PC-3 (cell line): ENCODE measurements at regions of chr17 and their contacts with region 1.

Region 1: DNA sequence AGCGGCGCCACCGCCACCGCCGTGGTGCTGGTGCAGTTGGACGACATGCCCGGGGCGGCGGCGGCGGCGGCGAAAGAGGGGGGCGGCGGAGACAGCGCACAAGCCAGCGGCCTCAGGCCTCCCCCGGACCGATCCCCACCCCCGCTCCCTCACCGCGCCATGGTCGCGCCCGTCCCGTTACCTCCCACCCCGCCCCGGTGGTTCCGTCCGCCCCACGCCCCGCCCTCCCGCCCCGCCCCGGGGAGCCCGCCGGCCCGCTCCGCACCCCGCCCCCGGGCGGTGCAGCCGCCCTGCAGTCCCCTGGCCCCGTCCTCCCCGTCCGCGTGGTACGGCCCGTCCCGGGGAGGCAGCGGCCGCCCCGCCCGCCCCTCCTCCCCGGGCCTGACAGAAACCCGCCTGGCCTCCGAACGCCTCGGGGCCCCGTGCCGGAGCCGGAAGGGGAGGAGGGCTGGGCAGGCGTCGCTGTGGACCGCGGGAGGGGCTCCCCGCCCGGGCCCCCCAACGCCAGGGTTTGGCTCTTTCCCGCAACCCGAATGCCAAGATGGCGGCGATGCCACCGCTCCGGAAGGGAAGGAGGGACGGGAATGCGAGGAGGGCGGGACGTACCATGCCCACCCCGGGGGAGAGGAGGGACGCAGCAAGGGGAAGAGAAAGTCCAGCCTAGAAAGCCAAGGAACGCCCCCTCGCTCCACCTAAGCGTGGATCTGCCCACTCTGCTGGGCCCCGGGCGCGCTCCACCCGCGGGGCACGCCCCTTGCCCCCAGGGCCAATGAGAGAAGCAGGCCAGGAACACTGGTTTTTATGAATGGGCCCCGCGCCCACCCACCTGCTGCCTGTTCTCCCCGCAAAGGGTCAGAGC is at the start of gene PIP4K2B:
- DNase-seq: peak; percentile 89
- ATAC-seq: peak; percentile 92
- H3K4me3 ChIP-seq: peak within 1 kb of the TSS; percentile 72
- H3K27ac ChIP-seq: peak within 1 kb of the TSS; percentile 92
- H3K4me1 ChIP-seq: peaks cover 16% of the 10 kb centered on the region
- H3K27me3 ChIP-seq: no peaks in the 10 kb centered on the region
- CTCF ChIP-seq: no peak
- total RNA-seq, gene PIP4K2B: 25.5 and 43.7 TPM in 2 replicates

Region 2: DNA sequence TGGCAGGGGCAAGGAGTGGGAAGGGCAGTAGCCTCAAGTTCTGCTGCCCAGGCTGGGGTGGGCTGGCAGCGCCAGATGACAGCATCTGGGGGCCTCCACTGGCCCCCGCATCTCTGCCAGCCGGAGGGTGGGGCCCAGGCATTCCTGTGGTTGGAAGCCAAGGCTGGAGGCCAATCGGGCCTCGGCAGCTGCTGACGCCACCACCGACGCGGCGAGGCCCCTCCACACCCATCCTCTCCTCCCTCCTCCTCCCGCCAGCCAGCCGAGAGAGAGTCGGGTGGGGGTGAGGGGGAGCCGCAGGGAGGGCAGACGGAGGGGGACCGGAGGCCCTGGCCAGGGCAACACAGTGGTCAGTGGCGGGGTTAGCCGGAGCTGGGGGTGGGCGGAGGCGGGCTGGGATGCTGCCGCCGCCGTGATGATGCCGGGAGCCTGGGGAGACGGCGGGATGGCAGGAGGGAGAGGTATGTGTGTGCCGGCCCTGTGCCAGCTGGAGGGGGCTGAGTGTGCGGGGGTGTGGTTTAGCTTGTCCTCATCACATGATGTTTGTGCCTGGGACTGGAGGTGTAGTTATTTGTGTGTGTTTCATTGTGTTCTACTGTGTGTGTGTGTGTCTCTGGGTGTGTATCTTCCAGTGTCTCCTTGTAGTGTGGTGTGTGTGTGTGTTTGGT is 334.8 kb before region 1 on chr17:
- CTCF ChIA-PET with region 1: no interaction called
- POLR2A ChIA-PET with region 1: no interaction called
- intact Hi-C with region 1: no loop called
- DNase-seq: no peak
- ATAC-seq: no peak
- H3K4me3 ChIP-seq: no peak overlapping the region
- H3K27ac ChIP-seq: no peak overlapping the region
- H3K4me1 ChIP-seq: no peaks in the 10 kb centered on the region
- H3K27me3 ChIP-seq: no peaks in the 10 kb centered on the region
- CTCF ChIP-seq: no peak

Region 3: GRCh38 chr17:38752119-38752929 is 47.3 kb before region 1 on chr17 and contains the start of gene PSMB3:
- CTCF ChIA-PET with region 1: no interaction called
- POLR2A ChIA-PET with region 1: interaction called, 16 read pairs
- intact Hi-C with region 1: loop called (anchors 2 kb)
- DNase-seq: peak; percentile 98
- ATAC-seq: peak; percentile 68
- H3K4me3 ChIP-seq: peak within 1 kb of the TSS; percentile 94
- H3K27ac ChIP-seq: peak within 1 kb of the TSS; percentile 64
- H3K4me1 ChIP-seq: peaks cover 16% of the 10 kb centered on the region
- H3K27me3 ChIP-seq: no peaks in the 10 kb centered on the region
- CTCF ChIP-seq: no peak
- total RNA-seq, gene PSMB3: 366 and 441 TPM in 2 replicates

Region 4: GRCh38 chr17:38925263-38925995 is 125.8 kb after region 1 on chr17 and contains the start of gene LASP1NB:
- CTCF ChIA-PET with region 1: no interaction called
- POLR2A ChIA-PET with region 1: no interaction called
- intact Hi-C with region 1: no loop called
- DNase-seq: no peak
- ATAC-seq: no peak
- H3K4me3 ChIP-seq: no peak within 1 kb of the TSS
- H3K27ac ChIP-seq: no peak within 1 kb of the TSS
- H3K4me1 ChIP-seq: no peaks in the 10 kb centered on the region
- H3K27me3 ChIP-seq: no peaks in the 10 kb centered on the region
- CTCF ChIP-seq: no peak